ENCODE measurements at regions of chr6 and their contacts with region 1.

Region 1: GRCh38 chr6:138115877-138116660 is 8.8 kb upstream of the PERP start:
- DNase-seq: peak; percentile 79
- ATAC-seq: peak; percentile 83
- H3K4me3 ChIP-seq: no peak overlapping the region
- H3K4me3 Mint-ChIP-seq: no peak overlapping the region
- H3K27ac ChIP-seq: no peak overlapping the region
- H3K27ac Mint-ChIP-seq: no peak overlapping the region
- H3K4me1 ChIP-seq: peaks cover 0 to 6% of the 10 kb centered on the region in 2 donors
- H3K4me1 Mint-ChIP-seq: peaks cover 2% of the 10 kb centered on the region
- H3K27me3 ChIP-seq: peaks cover 0 to 11% (median 0%) of the 10 kb centered on the region in 4 experiments
- H3K27me3 Mint-ChIP-seq: peaks cover 38% of the 10 kb centered on the region
- CTCF ChIP-seq: peak; percentile 90

Region 2: DNA sequence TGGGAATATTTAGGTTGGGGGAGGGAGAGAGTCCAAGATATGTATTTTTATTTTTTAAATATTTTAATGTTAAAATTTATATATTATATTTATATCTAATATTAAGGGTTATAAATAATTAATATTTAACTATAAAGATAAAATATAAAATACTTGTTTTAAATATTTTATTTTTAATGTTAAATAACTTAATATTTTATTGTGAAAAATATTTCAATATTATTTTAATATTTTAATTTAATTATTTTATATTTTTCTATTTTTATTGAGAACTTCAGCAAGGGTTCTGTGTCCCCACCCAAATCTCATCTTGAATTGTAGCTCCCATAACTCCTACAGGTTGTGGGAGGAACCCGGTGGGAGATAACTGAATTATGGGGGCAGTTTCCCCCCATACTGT is 42.8 kb before region 1 on chr6:
- CTCF ChIA-PET with region 1: no interaction called
- POLR2A ChIA-PET with region 1: no interaction called
- intact Hi-C with region 1: no loop called
- DNase-seq: no peak
- ATAC-seq: no peak
- H3K4me3 ChIP-seq: no peak overlapping the region
- H3K4me3 Mint-ChIP-seq: no peak overlapping the region
- H3K27ac ChIP-seq: no peak overlapping the region
- H3K27ac Mint-ChIP-seq: no peak overlapping the region
- H3K4me1 ChIP-seq: no peaks in the 10 kb centered on the region
- H3K4me1 Mint-ChIP-seq: no peaks in the 10 kb centered on the region
- H3K27me3 ChIP-seq: peaks cover 0 to 12% (median under 1%) of the 10 kb centered on the region in 4 experiments
- H3K27me3 Mint-ChIP-seq: peaks cover 45% of the 10 kb centered on the region
- CTCF ChIP-seq: no peak

Region 3: GRCh38 chr6:138145402-138145801 is 29.3 kb after region 1 on chr6:
- CTCF ChIA-PET with region 1: no interaction called
- POLR2A ChIA-PET with region 1: no interaction called
- intact Hi-C with region 1: no loop called
- DNase-seq: no peak
- ATAC-seq: no peak
- H3K4me3 ChIP-seq: no peak overlapping the region
- H3K4me3 Mint-ChIP-seq: no peak overlapping the region
- H3K27ac ChIP-seq: no peak overlapping the region
- H3K27ac Mint-ChIP-seq: no peak overlapping the region
- H3K4me1 ChIP-seq: peaks cover 0 to 3% of the 10 kb centered on the region in 2 donors
- H3K4me1 Mint-ChIP-seq: peaks cover 5% of the 10 kb centered on the region
- H3K27me3 ChIP-seq: peaks cover 0 to 9% (median 2%) of the 10 kb centered on the region in 4 experiments
- H3K27me3 Mint-ChIP-seq: peaks cover 30% of the 10 kb centered on the region
- CTCF ChIP-seq: no peak

Region 4: DNA sequence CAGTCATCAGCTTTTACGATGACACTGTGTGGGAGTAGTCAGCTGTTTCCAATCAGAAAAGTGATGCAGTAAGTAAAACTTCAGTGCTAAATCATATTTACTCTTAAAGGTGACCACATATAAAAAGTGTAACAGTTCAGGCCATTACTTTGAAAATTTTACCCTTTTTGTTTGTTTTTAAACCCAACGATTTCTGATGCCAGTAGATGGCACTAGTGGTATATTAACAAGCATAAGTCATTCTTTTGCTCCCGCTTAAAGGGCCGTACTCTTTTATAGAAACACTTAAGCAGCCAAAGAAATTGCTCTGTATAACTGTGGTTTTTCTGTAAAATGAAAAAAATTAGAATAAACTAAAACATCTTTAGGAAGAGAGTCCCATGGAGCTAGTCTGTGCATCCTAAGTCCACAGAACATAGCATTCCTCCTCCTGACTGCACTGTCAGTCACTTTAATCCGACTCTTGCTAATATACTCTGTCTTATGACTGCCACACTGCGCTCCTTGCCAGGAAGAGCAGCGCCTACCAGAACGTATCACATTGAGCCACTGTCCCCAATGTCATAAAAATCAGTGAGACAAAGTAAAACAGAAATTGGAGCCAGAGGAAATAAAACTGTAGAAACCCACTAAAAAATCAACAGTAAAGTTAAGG is 313.0 kb after region 1 on chr6:
- CTCF ChIA-PET with region 1: interaction called, 28 read pairs
- POLR2A ChIA-PET with region 1: no interaction called
- intact Hi-C with region 1: loop called (anchors 1 kb)
- DNase-seq: peak; percentile 68
- ATAC-seq: peak; percentile 28
- H3K4me3 ChIP-seq: no peak overlapping the region
- H3K4me3 Mint-ChIP-seq: no peak overlapping the region
- H3K27ac ChIP-seq: no peak overlapping the region
- H3K27ac Mint-ChIP-seq: no peak overlapping the region
- H3K4me1 ChIP-seq: peaks cover 0 to 4% of the 10 kb centered on the region in 2 donors
- H3K4me1 Mint-ChIP-seq: peaks cover 6% of the 10 kb centered on the region
- H3K27me3 ChIP-seq: peaks cover 0 to 4% (median 0%) of the 10 kb centered on the region in 4 experiments
- H3K27me3 Mint-ChIP-seq: peaks cover 9% of the 10 kb centered on the region
- CTCF ChIP-seq: peak; percentile 90

Region 5: DNA sequence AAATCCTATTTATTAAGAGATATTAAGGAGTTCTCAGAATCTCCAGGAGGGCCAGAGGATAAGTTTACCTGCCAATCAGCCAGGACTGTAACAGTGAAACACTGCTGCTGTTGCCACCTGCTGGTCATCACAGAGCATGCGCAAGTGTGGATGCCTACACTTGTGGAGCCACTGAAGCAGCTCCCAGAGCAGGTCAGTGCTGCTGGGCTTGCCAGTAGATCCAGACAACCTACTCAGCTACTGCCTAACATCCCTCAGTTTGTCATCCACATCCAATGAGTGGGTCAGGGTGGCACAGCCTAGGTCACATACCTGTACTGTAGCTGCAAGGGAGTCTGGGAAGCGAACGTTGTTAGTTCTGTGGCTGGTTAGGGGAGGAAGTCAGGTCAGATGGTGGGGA is 401.6 kb after region 1 on chr6:
- CTCF ChIA-PET with region 1: interaction called, 146 read pairs
- POLR2A ChIA-PET with region 1: no interaction called
- intact Hi-C with region 1: loop called (anchors 1 kb)
- DNase-seq: peak; percentile 70
- ATAC-seq: peak; percentile 86
- H3K4me3 ChIP-seq: no peak overlapping the region
- H3K4me3 Mint-ChIP-seq: no peak overlapping the region
- H3K27ac ChIP-seq: no peak overlapping the region
- H3K27ac Mint-ChIP-seq: peak overlapping the region; percentile 21
- H3K4me1 ChIP-seq: no peaks in the 10 kb centered on the region
- H3K4me1 Mint-ChIP-seq: no peaks in the 10 kb centered on the region
- H3K27me3 ChIP-seq: no peaks in the 10 kb centered on the region
- H3K27me3 Mint-ChIP-seq: peaks cover 17% of the 10 kb centered on the region
- CTCF ChIP-seq: peak; percentile 88

Region 6: DNA sequence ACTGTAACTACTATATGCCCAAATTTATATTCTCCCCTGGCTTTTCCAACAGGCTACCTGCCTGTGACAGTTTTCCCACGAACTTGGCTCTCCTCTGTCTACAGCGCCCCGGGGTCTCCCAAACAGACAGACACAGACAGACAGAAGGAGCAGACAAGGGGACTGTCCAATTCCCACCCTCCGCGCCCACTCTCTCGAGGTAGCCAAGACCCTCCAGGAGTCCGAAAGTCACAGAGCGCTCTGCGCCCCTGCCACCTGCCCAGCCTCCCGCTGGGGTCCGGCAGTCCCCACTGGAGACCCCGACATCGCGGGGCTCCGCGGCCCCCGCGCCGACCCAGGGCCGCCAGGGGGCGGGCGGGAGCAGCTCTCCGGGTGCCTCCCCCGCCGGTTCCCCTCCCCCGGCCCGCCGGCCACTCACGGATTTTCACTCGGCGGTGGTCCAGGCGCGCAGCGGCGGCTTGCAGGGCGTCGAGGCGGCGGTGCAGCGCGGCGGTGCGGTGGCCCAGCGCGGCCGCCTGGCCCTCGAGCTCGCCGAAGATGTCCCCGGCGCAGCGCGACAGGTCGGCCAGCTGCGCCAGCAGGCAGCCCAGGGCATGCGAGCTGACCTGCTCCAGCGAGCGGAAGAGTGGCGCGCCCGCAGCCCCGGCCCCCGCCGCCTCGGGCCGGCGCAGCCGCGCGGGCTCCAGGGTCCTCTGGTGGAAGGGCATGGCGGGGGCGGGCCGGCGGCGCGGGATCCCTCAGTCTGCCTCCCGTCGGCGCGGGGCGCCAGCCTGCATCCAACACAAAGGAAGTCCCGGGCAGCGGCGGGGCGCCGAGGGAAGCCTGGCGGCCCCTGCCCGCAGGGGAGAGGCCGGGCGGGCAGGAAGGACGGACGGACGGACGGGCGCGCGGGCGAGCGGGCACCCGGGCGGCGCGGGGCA is 576.2 kb after region 1 on chr6:
- CTCF ChIA-PET with region 1: no interaction called
- POLR2A ChIA-PET with region 1: no interaction called
- intact Hi-C with region 1: loop called (anchors 5 kb)
- DNase-seq: peak; percentile 76
- ATAC-seq: peak; percentile 76
- H3K4me3 ChIP-seq: peak overlapping the region in 4 of 5 experiments; percentile 7 to 76 (median 64)
- H3K4me3 Mint-ChIP-seq: peak overlapping the region; percentile 86
- H3K27ac ChIP-seq: no peak overlapping the region
- H3K27ac Mint-ChIP-seq: no peak overlapping the region
- H3K4me1 ChIP-seq: peaks cover 9 to 11% of the 10 kb centered on the region in 2 donors
- H3K4me1 Mint-ChIP-seq: peaks cover 10% of the 10 kb centered on the region
- H3K27me3 ChIP-seq: peaks cover 0 to 28% (median 12%) of the 10 kb centered on the region in 4 experiments
- H3K27me3 Mint-ChIP-seq: peaks cover 31% of the 10 kb centered on the region
- CTCF ChIP-seq: peak; percentile 84